ENCODE measurements at regions of chr15 and their contacts with region 1.

Region 1: GRCh38 chr15:62909257-62909656 is 133.3 kb upstream of the TPM1 start:
- DNase-seq: no peak
- H3K4me3 ChIP-seq: no peak overlapping the region
- CTCF ChIP-seq: no peak

Region 2: GRCh38 chr15:63013052-63013808 is 104.0 kb after region 1 on chr15:
- in situ Hi-C with region 1: loop called (anchors 5 kb)
- DNase-seq: peak; percentile 60
- H3K4me3 ChIP-seq: no peak overlapping the region
- CTCF ChIP-seq: no peak